A549 (cell line): ENCODE measurements at regions of chr3 and their contacts with region 1.

Region 1: DNA sequence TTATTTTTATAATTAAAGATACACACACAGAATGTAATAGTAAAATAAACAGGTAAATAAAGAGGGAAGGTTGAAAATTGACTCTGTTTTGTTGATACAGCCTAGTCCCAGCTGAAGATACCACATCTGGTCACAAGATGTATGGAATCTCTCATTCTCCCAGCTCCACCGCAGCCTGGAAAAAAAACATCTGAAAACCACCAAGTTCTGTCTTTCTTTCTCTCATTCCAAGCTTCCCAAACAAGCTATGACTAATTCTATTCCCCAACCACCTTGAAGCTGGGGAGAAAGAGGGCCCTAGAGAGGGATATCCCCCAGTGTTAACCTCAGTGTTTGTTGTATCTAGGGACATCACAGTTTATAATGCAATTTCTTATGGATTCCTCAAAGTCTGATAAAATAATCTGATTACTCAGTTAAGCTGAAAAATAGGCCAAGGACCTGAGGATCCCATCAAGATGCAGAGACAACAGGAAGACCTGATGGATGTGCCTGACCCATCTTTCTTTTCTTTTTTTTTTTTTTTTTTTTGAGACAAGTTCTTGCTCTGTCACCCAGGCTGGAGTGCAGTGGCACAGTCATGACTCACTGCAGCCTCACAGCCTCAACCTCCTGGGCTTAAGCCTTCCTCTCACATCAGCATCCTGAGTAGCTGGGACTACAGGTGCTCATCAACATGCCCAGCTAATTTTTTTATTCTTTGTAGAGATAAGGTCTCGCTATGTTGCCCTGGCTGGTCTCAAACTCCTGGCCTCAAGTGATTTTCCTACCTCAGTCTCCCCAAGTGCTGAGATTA is 38.1 kb downstream of the SRGAP3 start:
- DNase-seq: no peak
- ATAC-seq: peak in 1 of 2 experiments; percentile 20; a peak in 1 of 6 replicates
- H3K4me3 ChIP-seq: no peak overlapping the region
- H3K27ac ChIP-seq: no peak overlapping the region
- H3K4me1 ChIP-seq: no peaks in the 10 kb centered on the region
- CTCF ChIP-seq: no peak
- EP300 ChIP-seq: no peak
- POLR2A ChIP-seq: no peak
- RAD21 ChIP-seq: no peak

Region 2: DNA sequence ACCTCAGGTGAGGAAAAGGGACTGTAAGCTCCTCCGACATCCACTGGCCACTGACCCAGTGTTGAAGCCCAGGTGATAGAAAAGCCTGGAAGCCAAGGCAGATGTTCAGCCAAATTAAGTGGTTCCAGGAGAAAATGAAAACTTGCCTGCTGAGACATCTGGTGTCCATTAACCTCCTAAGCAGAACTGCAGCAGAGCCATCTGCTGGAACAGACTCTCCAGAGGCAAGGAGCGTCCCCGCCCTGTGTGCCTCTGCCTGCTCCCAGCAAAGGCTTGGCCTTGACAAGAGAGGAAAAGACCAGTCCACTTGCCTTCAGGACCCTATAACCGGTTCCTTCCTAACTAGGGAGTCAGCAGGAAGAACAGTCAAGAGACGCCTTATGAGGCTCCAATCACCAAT is 10.1 kb before region 1 on chr3:
- CTCF ChIA-PET with region 1: interaction called, 10 read pairs
- POLR2A ChIA-PET with region 1: no interaction called
- DNase-seq: no peak
- ATAC-seq: no peak
- H3K4me3 ChIP-seq: no peak overlapping the region
- H3K27ac ChIP-seq: no peak overlapping the region
- H3K4me1 ChIP-seq: no peaks in the 10 kb centered on the region
- CTCF ChIP-seq: no peak
- EP300 ChIP-seq: no peak
- POLR2A ChIP-seq: no peak
- RAD21 ChIP-seq: no peak